ENCODE measurements at regions of chr1 and their contacts with region 1.

Region 1: DNA sequence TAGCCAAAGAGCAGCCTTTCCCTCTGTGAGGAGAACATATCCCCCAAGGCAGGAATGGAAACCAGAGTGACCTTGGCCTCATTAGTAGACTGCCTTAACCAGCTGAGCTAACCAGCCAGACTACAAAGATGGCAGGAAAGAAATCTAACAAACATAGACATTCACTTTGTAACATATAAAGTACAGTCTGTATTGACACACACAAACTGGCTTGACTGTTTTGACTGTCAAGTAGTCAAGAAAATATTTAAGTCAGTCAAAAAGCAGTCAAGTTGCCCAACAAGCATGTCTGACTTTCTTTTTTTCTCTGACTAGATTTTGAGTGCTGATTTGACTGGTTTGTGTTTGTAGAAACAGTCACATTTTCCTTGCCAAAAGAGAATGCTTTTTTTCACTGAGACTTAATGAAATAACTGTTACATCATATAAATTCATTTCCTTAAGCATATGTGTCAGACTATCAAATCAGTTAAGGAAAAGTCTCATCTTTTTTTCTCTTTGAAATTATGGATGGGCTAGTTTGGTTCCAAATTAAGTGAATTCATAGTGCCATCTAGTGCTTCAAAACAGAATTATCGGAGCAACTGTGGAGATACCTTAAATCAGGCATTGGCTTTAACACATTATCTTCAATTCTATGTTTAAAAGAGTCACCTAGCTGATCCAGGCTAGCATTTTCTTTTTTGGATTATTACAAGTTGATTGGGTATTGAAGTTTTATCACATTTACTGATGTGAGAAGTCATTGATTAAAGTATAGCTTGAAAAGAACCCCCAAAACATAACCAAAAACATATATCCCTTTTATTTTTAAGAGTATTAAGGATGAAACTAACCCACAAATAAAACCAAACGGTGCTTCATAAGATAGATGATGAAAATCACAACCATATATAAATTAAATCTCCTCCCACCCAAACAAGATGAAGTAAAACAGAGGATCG is 75.0 kb downstream of the ATP6V1G3 start:
- DNase-seq: peak in 6 of 9 donors; percentile 3 to 57 (median 40)
- ATAC-seq: peak; percentile 71
- H3K4me3 ChIP-seq: no peak overlapping the region
- H3K4me3 Mint-ChIP-seq: no peak overlapping the region
- H3K27ac ChIP-seq: no peak overlapping the region
- H3K27ac Mint-ChIP-seq: no peak overlapping the region
- H3K4me1 ChIP-seq: no peaks in the 10 kb centered on the region
- H3K4me1 Mint-ChIP-seq: peaks cover 0 to 5% (median 0%) of the 10 kb centered on the region in 7 donors
- H3K27me3 ChIP-seq: no peaks in the 10 kb centered on the region
- H3K27me3 Mint-ChIP-seq: no peaks in the 10 kb centered on the region

Region 2: DNA sequence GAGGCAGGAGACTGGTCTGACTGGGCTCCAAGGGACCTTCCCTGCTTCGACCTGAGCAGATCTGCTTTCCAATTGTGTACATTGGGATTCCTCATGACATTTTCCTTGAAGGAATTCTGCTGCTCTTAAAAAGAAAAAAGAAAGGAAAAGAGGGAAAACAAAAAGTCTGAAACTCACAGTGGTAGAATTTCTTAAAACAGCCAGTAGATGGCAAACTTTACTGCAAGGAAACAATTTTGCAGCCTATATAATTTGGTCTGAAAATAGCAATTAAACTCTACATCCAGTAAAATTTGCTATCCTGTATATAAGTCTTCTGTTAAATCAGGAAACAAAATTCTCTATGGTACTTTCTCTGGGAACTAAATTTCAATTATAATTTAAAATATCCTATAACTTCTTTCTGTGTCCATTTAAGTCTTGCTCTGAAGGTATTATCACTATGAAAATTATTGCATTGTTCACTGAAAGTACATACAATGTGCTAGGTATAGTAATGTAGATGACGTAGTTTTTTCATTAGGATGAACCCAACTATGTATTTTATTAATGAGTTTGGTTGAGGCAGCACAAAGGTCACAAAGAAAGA is 1137.6 kb before region 1 on chr1:
- CTCF ChIA-PET with region 1: no interaction called
- POLR2A ChIA-PET with region 1: no interaction called
- intact Hi-C with region 1: loop called in 1 of 2 experiments (anchors 10 kb)
- DNase-seq: peak in 4 of 9 donors; percentile 11 to 23 (median 17)
- ATAC-seq: no peak
- H3K4me3 ChIP-seq: no peak overlapping the region
- H3K4me3 Mint-ChIP-seq: no peak overlapping the region
- H3K27ac ChIP-seq: no peak overlapping the region
- H3K27ac Mint-ChIP-seq: no peak overlapping the region
- H3K4me1 ChIP-seq: no peaks in the 10 kb centered on the region
- H3K4me1 Mint-ChIP-seq: no peaks in the 10 kb centered on the region
- H3K27me3 ChIP-seq: no peaks in the 10 kb centered on the region
- H3K27me3 Mint-ChIP-seq: peaks cover 0 to 3% (median 0%) of the 10 kb centered on the region in 5 donors

Region 3: DNA sequence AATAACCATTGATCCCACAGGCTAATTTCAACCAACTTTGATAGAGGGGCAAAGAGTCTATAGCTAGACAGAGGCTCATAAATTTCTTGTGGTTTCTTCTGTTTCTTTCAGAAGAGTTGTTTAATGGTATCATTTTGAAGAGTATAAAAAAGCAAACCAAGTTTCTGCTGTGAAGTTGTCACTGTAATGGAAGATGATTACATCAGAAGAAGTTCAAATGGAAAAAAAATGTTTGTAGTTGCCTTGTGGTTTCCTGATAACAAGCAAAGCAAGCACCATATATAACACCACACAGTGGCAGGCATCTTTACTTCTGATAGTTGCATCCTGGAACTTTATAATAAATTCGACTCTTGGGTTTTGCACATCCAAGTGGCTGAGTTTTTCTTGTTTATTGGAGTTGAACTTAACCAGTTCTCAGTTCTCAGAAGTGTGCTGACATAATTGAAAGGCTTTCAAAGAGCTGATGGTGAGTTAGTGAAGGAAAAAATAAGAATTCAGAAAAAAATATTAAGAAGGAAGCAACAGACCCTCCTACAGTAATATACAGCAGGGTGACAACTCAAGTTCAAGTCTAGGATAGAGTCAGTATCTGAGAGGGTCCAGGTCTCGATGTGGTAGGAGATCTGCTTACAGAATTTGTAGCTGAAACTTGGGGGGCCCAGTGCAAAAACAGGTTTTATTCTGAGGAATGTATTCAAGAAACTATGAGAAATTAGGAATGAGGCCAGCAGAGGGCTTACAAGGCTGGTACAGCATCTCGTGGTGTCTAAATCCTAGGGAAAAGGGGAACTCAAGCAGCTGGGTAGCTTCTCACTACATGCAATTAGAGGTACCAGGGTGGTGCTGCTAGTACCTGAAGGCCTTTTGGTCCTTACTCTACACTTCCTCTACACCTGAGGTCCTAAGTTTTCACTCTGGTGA is 1073.9 kb before region 1 on chr1:
- CTCF ChIA-PET with region 1: no interaction called
- POLR2A ChIA-PET with region 1: no interaction called
- intact Hi-C with region 1: loop called in 1 of 2 experiments (anchors 5 kb)
- DNase-seq: peak in 7 of 9 donors; percentile 63 to 89 (median 82)
- ATAC-seq: peak; percentile 95
- H3K4me3 ChIP-seq: no peak overlapping the region
- H3K4me3 Mint-ChIP-seq: peak overlapping the region in 9 of 10 donors; percentile 28 to 72 (median 68)
- H3K27ac ChIP-seq: peak overlapping the region; percentile 45
- H3K27ac Mint-ChIP-seq: peak overlapping the region; percentile 65 to 93 (median 88)
- H3K4me1 ChIP-seq: peaks cover 0 to 28% of the 10 kb centered on the region in 2 donors
- H3K4me1 Mint-ChIP-seq: peaks cover 18 to 56% (median 46%) of the 10 kb centered on the region in 7 donors
- H3K27me3 ChIP-seq: no peaks in the 10 kb centered on the region
- H3K27me3 Mint-ChIP-seq: peaks cover 0 to 20% (median 0%) of the 10 kb centered on the region in 5 donors

Region 4: GRCh38 chr1:197521118-197521739 is 944.2 kb before region 1 on chr1:
- CTCF ChIA-PET with region 1: interaction called, 4 read pairs
- POLR2A ChIA-PET with region 1: no interaction called
- intact Hi-C with region 1: loop called (anchors 1 kb)
- DNase-seq: peak in 7 of 9 donors; percentile 2 to 34 (median 24)
- ATAC-seq: no peak
- H3K4me3 ChIP-seq: no peak overlapping the region
- H3K4me3 Mint-ChIP-seq: no peak overlapping the region
- H3K27ac ChIP-seq: no peak overlapping the region
- H3K27ac Mint-ChIP-seq: no peak overlapping the region
- H3K4me1 ChIP-seq: no peaks in the 10 kb centered on the region
- H3K4me1 Mint-ChIP-seq: peaks cover 0 to 5% (median 0%) of the 10 kb centered on the region in 7 donors
- H3K27me3 ChIP-seq: no peaks in the 10 kb centered on the region
- H3K27me3 Mint-ChIP-seq: no peaks in the 10 kb centered on the region

Region 5: DNA sequence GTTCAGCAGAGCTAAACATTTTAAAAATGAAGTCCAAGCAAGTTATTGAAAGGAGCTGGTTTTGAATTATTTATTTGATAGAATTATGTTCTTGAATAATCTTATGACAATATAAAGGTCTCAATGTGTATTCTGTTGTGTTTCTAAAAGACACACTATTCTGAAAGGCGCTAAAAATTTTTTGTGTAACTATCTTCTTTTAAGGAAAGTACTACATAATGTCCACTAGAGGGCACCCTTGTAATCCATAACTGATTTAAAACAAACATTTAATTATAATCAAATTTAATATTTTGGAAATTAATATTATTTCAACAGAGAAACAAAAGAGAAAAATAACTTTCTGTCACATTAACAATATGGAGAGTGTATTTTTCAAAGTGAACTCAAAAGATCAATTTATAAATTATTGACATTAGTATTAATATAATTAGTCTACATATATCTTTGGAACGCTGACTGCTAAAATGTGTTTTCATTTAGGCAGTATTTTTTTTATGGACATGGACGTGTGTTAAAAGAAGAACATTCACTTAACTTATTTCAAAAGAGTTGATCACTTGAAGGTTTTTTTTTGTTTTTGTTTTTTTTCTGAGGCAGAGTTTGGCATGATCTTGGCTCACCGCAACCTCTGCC is 938.6 kb before region 1 on chr1:
- CTCF ChIA-PET with region 1: interaction called, 4 read pairs
- POLR2A ChIA-PET with region 1: no interaction called
- intact Hi-C with region 1: loop called (anchors 1 kb)
- DNase-seq: peak in 6 of 9 donors; percentile 9 to 53 (median 37)
- ATAC-seq: peak; percentile 69
- H3K4me3 ChIP-seq: no peak overlapping the region
- H3K4me3 Mint-ChIP-seq: no peak overlapping the region
- H3K27ac ChIP-seq: no peak overlapping the region
- H3K27ac Mint-ChIP-seq: no peak overlapping the region
- H3K4me1 ChIP-seq: no peaks in the 10 kb centered on the region
- H3K4me1 Mint-ChIP-seq: no peaks in the 10 kb centered on the region
- H3K27me3 ChIP-seq: no peaks in the 10 kb centered on the region
- H3K27me3 Mint-ChIP-seq: no peaks in the 10 kb centered on the region

Region 6: GRCh38 chr1:197614916-197615692 is 850.4 kb before region 1 on chr1:
- CTCF ChIA-PET with region 1: interaction called, 7 read pairs
- POLR2A ChIA-PET with region 1: interaction called, 3 read pairs
- intact Hi-C with region 1: loop called (anchors 1 to 5 kb)
- DNase-seq: peak in 5 of 9 donors; percentile 0 to 27 (median 8)
- ATAC-seq: peak; percentile 55
- H3K4me3 ChIP-seq: no peak overlapping the region
- H3K4me3 Mint-ChIP-seq: no peak overlapping the region
- H3K27ac ChIP-seq: no peak overlapping the region
- H3K27ac Mint-ChIP-seq: peak overlapping the region in 1 of 9 donors; percentile 65
- H3K4me1 ChIP-seq: no peaks in the 10 kb centered on the region
- H3K4me1 Mint-ChIP-seq: peaks cover 0 to 4% (median 0%) of the 10 kb centered on the region in 7 donors
- H3K27me3 ChIP-seq: no peaks in the 10 kb centered on the region
- H3K27me3 Mint-ChIP-seq: no peaks in the 10 kb centered on the region